OCI-LY7 (cell line): ENCODE measurements at regions of chr14 and their contacts with region 1.

Region 1: GRCh38 chr14:49598485-49599300 is at the start of gene LRR1:
- DNase-seq: peak; percentile 88
- H3K4me3 ChIP-seq: peak within 1 kb of the TSS; percentile 99
- H3K27ac ChIP-seq: peak within 1 kb of the TSS; percentile 94
- H3K4me1 ChIP-seq: peaks cover 40% of the 10 kb centered on the region
- CTCF ChIP-seq: no peak
- total RNA-seq, gene LRR1: 83.4 and 89.8 TPM in 2 replicates

Region 2: DNA sequence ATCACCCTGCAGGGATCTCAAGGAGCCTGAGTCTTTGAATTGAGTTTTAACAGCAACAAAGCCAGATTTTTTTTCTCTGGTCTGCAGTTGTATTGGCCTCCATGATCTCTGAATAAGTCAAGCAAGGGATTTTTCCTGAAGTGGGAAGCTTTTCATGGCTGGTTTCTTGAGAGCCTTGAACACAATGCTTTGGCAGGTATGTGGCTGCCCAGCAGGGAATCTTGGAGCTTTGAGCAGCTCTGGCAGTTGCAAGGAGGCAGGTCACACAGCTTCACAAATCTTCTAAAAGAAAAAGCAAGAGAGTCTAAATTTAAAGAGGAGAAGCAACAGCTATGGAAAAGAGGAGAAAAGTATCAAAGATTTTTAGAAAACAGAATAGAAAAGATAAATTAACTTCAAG is 72.6 kb before region 1 on chr14:
- CTCF ChIA-PET with region 1: no interaction called
- POLR2A ChIA-PET with region 1: no interaction called
- intact Hi-C with region 1: no loop called
- DNase-seq: no peak
- H3K4me3 ChIP-seq: no peak overlapping the region
- H3K27ac ChIP-seq: no peak overlapping the region
- H3K4me1 ChIP-seq: no peaks in the 10 kb centered on the region
- CTCF ChIP-seq: no peak

Region 3: GRCh38 chr14:49585803-49586672 is 12.7 kb before region 1 on chr14 and contains the start of gene RPS29:
- CTCF ChIA-PET with region 1: interaction called, 5 read pairs
- POLR2A ChIA-PET with region 1: interaction called, 32 read pairs
- intact Hi-C with region 1: loop called (anchors 1 kb)
- DNase-seq: peak; percentile 100
- H3K4me3 ChIP-seq: peak within 1 kb of the TSS; percentile 96
- H3K27ac ChIP-seq: peak within 1 kb of the TSS; percentile 74
- H3K4me1 ChIP-seq: peaks cover 45% of the 10 kb centered on the region
- CTCF ChIP-seq: no peak
- total RNA-seq, gene RPS29: 3,800 and 6,504 TPM in 2 replicates

Region 4: DNA sequence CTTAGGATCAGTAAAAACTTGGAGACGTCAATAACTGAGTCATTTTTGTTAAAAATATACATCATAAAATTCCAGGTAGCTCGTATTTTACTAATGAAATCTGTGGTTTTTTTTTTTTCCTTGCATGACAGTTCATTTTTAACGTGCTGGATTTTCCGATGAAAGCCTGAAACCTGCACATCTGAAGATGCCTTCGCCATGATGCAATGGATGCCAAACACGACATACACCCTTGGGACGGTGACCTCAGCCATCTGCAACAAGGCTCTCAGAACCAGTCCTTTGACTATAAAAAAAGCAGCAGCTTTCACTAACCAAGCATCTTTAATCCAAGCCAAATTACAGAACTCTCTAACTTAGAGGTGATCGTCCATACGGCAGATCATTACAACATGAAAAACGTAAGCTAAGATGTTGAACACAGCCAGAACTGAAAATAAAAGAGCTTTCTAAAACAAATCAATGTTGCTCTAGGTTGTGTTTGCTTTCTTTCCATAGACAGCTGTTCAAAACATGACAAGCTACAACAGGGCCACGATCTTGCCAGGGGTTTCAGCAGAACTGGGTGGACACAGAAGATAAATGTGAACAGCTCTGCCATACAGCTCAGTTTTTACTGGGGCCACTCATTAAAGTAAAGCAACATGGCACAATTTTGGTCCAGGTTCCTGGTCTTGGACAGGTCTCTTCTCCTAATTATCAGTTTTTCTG is 1224.5 kb after region 1 on chr14:
- CTCF ChIA-PET with region 1: no interaction called
- POLR2A ChIA-PET with region 1: interaction called, 3 read pairs
- intact Hi-C with region 1: loop called (anchors 10 kb)
- DNase-seq: peak; percentile 71
- H3K4me3 ChIP-seq: peak overlapping the region; percentile 62
- H3K27ac ChIP-seq: peak overlapping the region; percentile 80
- H3K4me1 ChIP-seq: peaks cover 77% of the 10 kb centered on the region
- CTCF ChIP-seq: no peak